ENCODE measurements at regions of chr4 and their contacts with region 1.

Region 1: GRCh38 chr4:139501927-139502899 is 48.3 kb downstream of the RAB33B start:
- DNase-seq: no peak
- H3K4me3 Mint-ChIP-seq: no peak overlapping the region
- H3K27ac Mint-ChIP-seq: no peak overlapping the region
- H3K4me1 Mint-ChIP-seq: no peaks in the 10 kb centered on the region
- H3K27me3 Mint-ChIP-seq: no peaks in the 10 kb centered on the region
- CTCF ChIP-seq: no peak

Region 2: GRCh38 chr4:139416073-139416673 is 86.0 kb before region 1 on chr4:
- CTCF ChIA-PET with region 1: interaction called, 7 read pairs
- POLR2A ChIA-PET with region 1: no interaction called
- intact Hi-C with region 1: loop called (anchors 5 kb)
- DNase-seq: peak; percentile 60
- H3K4me3 Mint-ChIP-seq: no peak overlapping the region
- H3K27ac Mint-ChIP-seq: peak overlapping the region; percentile 71
- H3K4me1 Mint-ChIP-seq: peaks cover 19% of the 10 kb centered on the region
- H3K27me3 Mint-ChIP-seq: no peaks in the 10 kb centered on the region
- CTCF ChIP-seq: peak; percentile 46

Region 3: GRCh38 chr4:139470997-139471665 is 31.1 kb before region 1 on chr4:
- CTCF ChIA-PET with region 1: interaction called, 11 read pairs
- POLR2A ChIA-PET with region 1: no interaction called
- intact Hi-C with region 1: no loop called
- DNase-seq: no peak
- H3K4me3 Mint-ChIP-seq: no peak overlapping the region
- H3K27ac Mint-ChIP-seq: no peak overlapping the region
- H3K4me1 Mint-ChIP-seq: no peaks in the 10 kb centered on the region
- H3K27me3 Mint-ChIP-seq: no peaks in the 10 kb centered on the region
- CTCF ChIP-seq: no peak

Region 4: DNA sequence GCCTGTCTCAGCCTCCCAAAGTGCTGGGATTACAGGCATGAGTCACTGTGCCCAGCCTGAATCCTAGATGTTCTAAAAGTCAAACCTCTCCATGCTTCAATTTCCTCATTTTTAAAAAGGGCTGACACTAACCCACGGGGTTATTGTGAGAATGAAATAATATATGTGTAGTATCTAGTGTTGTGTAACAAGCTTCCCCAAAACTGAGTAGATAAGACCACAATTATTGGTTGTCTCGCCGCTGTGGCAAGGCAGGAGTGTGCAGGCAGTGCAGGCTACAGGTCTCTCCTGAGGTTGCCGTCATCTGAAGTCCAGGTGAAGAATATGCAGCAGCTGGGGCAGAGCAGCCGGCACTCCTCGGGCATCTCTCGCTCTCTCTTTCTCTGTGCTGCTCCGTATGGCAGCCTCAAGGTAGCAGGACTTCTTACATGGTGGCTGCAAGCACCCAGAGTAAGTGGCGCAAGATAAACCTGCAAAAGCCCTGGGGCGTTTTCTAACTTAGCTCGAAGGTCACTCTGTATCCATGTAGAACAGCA is 17.4 kb before region 1 on chr4:
- CTCF ChIA-PET with region 1: interaction called, 11 read pairs
- POLR2A ChIA-PET with region 1: interaction called, 3 read pairs
- intact Hi-C with region 1: no loop called
- DNase-seq: no peak
- H3K4me3 Mint-ChIP-seq: no peak overlapping the region
- H3K27ac Mint-ChIP-seq: no peak overlapping the region
- H3K4me1 Mint-ChIP-seq: no peaks in the 10 kb centered on the region
- H3K27me3 Mint-ChIP-seq: no peaks in the 10 kb centered on the region
- CTCF ChIP-seq: no peak

Region 5: GRCh38 chr4:139515531-139515958 is 13.3 kb after region 1 on chr4:
- CTCF ChIA-PET with region 1: interaction called, 11 read pairs
- POLR2A ChIA-PET with region 1: no interaction called
- intact Hi-C with region 1: no loop called
- DNase-seq: no peak
- H3K4me3 Mint-ChIP-seq: no peak overlapping the region
- H3K27ac Mint-ChIP-seq: no peak overlapping the region
- H3K4me1 Mint-ChIP-seq: no peaks in the 10 kb centered on the region
- H3K27me3 Mint-ChIP-seq: no peaks in the 10 kb centered on the region
- CTCF ChIP-seq: no peak

Region 6: DNA sequence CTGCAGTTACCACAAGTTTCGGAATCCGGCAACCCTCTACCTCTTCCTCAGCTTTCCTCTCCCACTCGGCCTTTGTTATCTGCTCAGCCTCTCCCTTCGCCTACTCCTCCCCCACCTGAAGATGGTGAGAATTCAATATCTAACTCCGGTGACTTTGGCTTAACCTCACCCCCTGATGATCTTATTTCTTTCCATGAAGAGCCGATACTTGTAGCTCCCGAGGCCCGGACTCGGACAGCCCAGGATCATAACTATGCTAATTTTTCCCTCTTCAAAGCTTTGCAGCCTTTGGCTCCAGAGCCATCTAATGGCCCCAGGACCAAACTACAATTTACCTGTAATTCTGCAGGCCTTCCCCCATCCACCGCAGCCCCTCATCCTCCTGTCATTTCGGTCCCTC is 131.4 kb after region 1 on chr4:
- CTCF ChIA-PET with region 1: interaction called, 8 read pairs
- POLR2A ChIA-PET with region 1: no interaction called
- intact Hi-C with region 1: loop called (anchors 1 kb)
- DNase-seq: peak; percentile 55
- H3K4me3 Mint-ChIP-seq: no peak overlapping the region
- H3K27ac Mint-ChIP-seq: peak overlapping the region; percentile 20
- H3K4me1 Mint-ChIP-seq: peaks cover 10% of the 10 kb centered on the region
- H3K27me3 Mint-ChIP-seq: no peaks in the 10 kb centered on the region
- CTCF ChIP-seq: peak; percentile 55

Measured in MCF 10A (cell line).